K562 (cell line): ENCODE measurements at regions of chr11 and their contacts with region 1.

Region 1: GRCh38 chr11:28529540-28530410 is 421.6 kb downstream of the METTL15 start:
- DNase-seq: peak; percentile 9 to 36 (median 12)
- ATAC-seq: no peak
- H3K4me3 ChIP-seq: no peak overlapping the region
- H3K27ac ChIP-seq: no peak overlapping the region
- H3K4me1 ChIP-seq: no peaks in the 10 kb centered on the region
- H3K27me3 ChIP-seq: no peaks in the 10 kb centered on the region
- CTCF ChIP-seq: peak in 2 of 3 experiments; percentile 19 to 50; a peak in 2 of 6 replicates
- EP300 ChIP-seq: no peak
- POLR2A ChIP-seq: no peak
- RAD21 ChIP-seq: peak; percentile 36 to 60; a peak in 3 of 4 replicates

Region 2: DNA sequence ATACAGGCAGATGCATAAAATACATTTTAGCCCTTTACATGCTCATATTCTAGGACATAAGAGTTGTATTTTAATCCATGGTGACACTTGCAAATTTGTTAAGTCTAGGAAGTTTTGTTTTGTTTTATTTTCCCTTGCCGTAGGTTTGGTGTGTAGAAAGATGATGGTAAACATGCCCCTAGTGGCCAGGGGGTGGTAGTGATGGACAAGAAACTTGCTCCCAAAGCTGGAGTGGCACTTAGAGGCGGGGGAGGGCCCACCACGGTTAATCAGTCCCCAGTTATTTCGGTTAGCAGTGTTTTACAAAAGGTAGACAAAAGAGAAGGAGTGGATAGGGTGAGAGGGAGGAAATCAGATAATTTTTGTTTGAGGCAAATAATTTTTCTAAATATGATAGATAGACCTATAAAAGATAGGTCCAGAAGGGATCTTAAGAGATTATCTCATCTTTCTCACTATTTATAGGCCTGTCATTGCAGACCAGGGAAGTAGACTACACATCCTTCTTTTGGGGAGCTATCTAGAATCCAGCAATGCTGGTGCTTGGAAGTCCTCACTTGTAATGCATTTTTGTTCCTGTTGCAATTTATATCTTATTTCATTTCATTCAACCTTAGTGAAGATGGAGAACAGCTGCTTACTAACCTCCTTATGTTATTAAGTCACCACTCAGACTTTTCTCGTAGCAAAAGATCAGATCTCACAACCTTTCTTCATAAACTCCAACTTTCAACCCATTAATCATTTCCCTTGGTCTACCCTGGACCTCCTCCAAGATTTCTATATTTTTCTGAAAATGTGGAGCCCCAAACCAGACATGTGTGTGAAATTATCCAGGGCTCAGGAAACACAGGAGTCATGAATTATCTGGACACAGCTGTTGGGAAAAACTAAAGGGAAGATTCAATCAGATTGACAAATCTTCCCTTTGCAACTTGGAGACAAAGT is 823.6 kb before region 1 on chr11:
- CTCF ChIA-PET with region 1: no interaction called
- POLR2A ChIA-PET with region 1: no interaction called
- in situ Hi-C with region 1: no loop called
- intact Hi-C with region 1: loop called (anchors 5 kb)
- DNase-seq: peak; percentile 18 to 62 (median 58)
- ATAC-seq: peak; percentile 79
- H3K4me3 ChIP-seq: no peak overlapping the region
- H3K27ac ChIP-seq: no peak overlapping the region
- H3K4me1 ChIP-seq: no peaks in the 10 kb centered on the region; a peak in 1 of 5 replicates
- H3K27me3 ChIP-seq: no peaks in the 10 kb centered on the region; a peak in 1 of 5 replicates
- CTCF ChIP-seq: peak; percentile 32 to 63 (median 50); a peak in 4 of 6 replicates
- EP300 ChIP-seq: no peak
- POLR2A ChIP-seq: no peak
- RAD21 ChIP-seq: no peak; a peak in 1 of 4 replicates

Region 3: GRCh38 chr11:28606930-28607329 is 77.2 kb after region 1 on chr11:
- CTCF ChIA-PET with region 1: no interaction called
- POLR2A ChIA-PET with region 1: no interaction called
- in situ Hi-C with region 1: no loop called
- intact Hi-C with region 1: no loop called
- DNase-seq: no peak
- ATAC-seq: no peak
- H3K4me3 ChIP-seq: no peak overlapping the region
- H3K27ac ChIP-seq: no peak overlapping the region
- H3K4me1 ChIP-seq: no peaks in the 10 kb centered on the region
- H3K27me3 ChIP-seq: no peaks in the 10 kb centered on the region
- CTCF ChIP-seq: no peak
- EP300 ChIP-seq: no peak
- POLR2A ChIP-seq: no peak
- RAD21 ChIP-seq: no peak